Activated B cell treated with CpG ODN at 0.5 μM for 24 hours (primary cell): ENCODE measurements at regions of chr19 and their contacts with region 1.

Region 1: DNA sequence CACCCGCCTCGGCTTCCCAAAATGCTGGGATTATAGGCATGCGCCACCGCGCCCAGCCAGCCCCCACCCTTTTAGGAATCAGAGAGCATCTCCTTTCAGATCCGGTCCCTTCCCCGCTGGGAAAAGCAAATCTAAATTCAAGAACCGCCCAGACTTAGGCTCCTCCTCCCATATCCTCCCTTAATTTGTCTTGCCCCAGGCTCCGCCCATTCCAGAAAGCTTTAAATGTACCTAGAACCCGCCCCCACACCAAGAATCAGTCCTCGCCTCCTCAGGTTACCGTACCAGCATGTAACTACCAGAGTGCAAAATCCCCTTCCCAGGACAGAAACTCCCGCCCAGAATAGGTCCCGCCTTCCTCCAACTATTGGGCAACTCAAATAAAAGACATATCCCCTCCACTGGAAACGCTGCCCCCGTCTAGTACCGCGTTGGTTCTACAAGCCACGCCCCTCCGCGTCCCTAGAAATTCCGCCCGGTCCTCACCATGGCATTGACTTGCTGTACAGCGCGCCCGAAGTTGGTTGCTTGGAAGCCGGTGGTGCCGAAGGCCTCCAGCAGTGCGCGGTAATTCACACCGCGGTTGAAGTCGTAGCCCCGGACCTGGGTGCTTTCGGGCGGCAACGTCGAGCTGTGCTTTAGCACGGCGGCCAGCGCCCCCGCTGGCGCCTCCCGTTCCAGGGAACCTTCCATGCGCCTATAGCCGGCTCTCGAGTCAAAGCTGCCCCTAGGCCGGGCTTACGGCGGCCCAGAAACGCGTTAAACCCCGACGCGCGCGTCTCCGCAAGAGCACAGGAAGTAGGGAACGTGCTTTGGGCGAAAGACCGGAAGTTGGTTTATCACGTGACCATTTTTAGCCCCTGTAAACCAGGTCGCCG is at the start of gene DHPS:
- DNase-seq: peak; percentile 71
- ATAC-seq: peak; percentile 78
- H3K4me3 Mint-ChIP-seq: peak within 1 kb of the TSS; percentile 94
- H3K27ac Mint-ChIP-seq: peak within 1 kb of the TSS; percentile 95
- H3K4me1 Mint-ChIP-seq: peaks cover 24% of the 10 kb centered on the region
- H3K27me3 Mint-ChIP-seq: no peaks in the 10 kb centered on the region
- CTCF ChIP-seq: no peak
- total RNA-seq, gene DHPS: 141 and 160 TPM in 2 replicates

Region 2: DNA sequence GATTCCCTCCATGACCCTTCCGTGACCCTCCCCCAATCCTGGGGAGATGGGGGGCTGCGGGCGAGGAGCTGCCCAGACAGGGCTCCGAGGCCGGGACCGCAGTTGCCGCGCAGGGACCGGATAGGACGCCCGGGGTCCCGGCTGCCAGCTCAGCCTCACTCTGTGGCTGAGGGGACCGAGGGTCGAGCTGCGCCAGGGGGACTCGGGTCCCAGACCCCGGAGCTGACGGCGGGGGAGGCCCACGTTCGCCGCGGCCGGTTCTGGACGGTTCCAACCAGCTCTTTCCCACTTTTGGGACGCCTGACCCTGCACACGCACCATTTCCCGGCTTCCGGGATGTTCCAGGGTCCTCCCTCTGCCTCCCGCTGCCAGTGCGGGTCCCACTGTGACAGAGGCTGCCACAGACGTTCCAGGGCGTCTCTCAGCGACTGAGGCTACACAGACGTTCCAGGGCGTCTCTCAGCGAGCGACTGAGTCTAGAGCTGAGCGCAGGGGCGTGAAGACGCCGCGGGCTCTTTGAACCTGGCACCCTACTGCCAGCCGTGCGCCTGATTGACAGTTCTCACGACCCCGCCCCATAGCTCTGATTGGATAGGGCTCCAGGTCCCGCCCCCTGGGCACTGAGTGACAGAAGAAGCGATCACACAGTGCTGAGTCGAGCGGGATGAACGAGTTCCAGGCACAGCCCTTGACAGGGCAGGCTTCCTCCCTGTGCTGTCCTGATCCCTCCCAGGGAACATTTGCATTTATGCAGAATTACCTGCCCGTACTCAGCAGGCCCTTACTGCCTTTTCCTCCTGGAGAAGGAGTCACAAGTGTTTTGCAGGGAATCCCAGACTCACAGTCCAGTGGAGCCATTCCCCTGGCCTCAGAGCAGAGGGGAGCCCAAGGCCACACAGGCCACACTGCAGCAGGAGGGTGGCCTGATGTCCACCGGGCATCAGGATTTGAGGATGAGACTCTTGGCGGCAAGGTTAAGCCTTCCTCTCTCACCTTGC is 347.9 kb before region 1 on chr19 and contains the start of gene ZNF563:
- CTCF ChIA-PET with region 1: no interaction called
- POLR2A ChIA-PET with region 1: interaction called, 12 read pairs
- intact Hi-C with region 1: no loop called
- DNase-seq: peak; percentile 93
- ATAC-seq: peak; percentile 86
- H3K4me3 Mint-ChIP-seq: peak within 1 kb of the TSS; percentile 96
- H3K27ac Mint-ChIP-seq: peak within 1 kb of the TSS; percentile 92
- H3K4me1 Mint-ChIP-seq: peaks cover 39% of the 10 kb centered on the region
- H3K27me3 Mint-ChIP-seq: no peaks in the 10 kb centered on the region
- CTCF ChIP-seq: no peak
- total RNA-seq, gene ZNF563: 3.6 and 3.7 TPM in 2 replicates

Region 3: GRCh38 chr19:12666265-12667048 is 14.9 kb before region 1 on chr19 and contains the starts of genes MAN2B1 and WDR83:
- CTCF ChIA-PET with region 1: interaction called, 5 read pairs
- POLR2A ChIA-PET with region 1: interaction called, 51 read pairs
- intact Hi-C with region 1: loop called (anchors 1 kb)
- DNase-seq: peak; percentile 83
- ATAC-seq: peak; percentile 70
- H3K4me3 Mint-ChIP-seq: peak within 1 kb of the TSS; percentile 97
- H3K27ac Mint-ChIP-seq: peak within 1 kb of the TSS; percentile 93
- H3K4me1 Mint-ChIP-seq: peaks cover 69% of the 10 kb centered on the region
- H3K27me3 Mint-ChIP-seq: no peaks in the 10 kb centered on the region
- CTCF ChIP-seq: no peak
- total RNA-seq, gene MAN2B1: 251 and 291 TPM in 2 replicates
- total RNA-seq, gene WDR83: 17.7 and 20.8 TPM in 2 replicates

Region 4: DNA sequence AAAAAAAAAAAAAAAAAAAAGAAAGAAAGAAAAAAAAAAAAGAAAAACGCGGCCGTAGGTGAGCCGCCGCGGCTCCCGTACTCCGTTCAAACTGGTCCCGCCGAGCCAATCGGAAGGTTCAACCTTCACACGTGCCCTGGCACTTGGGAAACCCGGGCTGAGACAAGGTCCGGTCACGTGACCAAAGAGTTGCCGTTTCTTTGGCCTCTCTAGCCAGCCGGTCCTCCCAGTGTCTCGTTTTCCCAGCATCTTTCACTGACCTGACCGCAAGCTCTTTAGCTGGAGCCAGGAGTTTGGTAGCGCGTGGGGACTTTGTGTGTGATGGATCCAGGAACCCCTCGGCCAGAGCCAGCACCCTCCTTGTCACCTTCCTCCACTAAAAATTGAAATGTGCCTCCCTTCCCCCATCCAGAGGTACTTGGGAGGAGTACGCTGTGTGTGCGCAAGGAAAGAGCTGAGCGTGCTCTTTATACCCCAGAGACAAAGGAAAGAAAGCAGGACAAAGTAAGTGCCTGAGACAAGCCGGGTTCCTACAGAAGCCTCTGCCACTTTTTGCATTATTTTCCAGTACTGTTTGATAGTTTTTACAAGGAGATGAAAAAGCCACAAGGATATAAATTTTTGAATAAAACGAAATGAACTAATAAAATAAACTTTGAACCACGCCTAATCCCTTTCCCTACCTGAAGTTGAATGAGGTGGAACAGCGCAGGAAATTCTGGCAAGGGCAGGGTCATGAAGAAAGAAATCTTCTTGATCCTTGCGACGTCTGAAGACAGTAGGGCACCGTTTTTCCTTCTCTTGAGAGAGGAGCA is 41.5 kb after region 1 on chr19:
- CTCF ChIA-PET with region 1: no interaction called
- POLR2A ChIA-PET with region 1: interaction called, 24 read pairs
- intact Hi-C with region 1: loop called (anchors 5 kb)
- DNase-seq: peak; percentile 75
- ATAC-seq: peak; percentile 84
- H3K4me3 Mint-ChIP-seq: peak overlapping the region; percentile 92
- H3K27ac Mint-ChIP-seq: peak overlapping the region; percentile 90
- H3K4me1 Mint-ChIP-seq: peaks cover 43% of the 10 kb centered on the region
- H3K27me3 Mint-ChIP-seq: no peaks in the 10 kb centered on the region
- CTCF ChIP-seq: no peak

Region 5: DNA sequence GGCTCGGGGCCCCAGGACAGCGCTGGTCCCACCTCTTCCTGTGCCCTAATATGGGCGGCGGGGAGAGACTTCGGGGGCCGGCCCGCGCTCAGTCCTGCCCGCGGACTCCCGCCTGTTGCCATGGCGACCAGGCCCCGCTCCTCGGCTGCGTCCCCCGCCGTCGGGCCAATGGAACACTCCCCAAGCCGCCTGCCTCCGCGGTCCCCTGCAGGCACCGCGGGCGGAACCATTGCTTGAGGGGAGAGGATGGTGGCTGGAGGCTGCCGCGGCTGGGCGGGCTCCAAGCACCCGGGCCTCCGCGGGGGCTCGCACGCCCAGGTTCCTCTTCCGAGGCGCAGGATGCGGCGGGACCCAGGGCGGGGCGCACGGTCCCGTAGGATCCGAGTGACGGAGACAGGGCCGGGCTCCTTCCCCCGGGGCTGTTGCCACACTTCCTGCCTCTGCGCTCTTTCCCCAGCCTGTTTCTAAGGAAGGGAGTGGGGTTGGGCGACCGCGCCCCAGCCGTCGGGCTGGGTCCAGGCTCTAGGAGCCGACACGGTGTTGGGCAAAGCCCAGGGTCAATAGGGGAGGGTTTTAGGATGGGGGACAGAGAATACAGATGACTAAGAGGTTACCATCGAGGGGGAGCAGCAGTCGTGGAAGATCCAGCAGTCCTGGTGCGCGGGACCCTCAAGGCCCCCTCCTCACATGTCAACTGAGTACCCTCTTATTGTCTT is 108.7 kb after region 1 on chr19:
- CTCF ChIA-PET with region 1: no interaction called
- POLR2A ChIA-PET with region 1: interaction called, 17 read pairs
- intact Hi-C with region 1: no loop called
- DNase-seq: peak; percentile 95
- ATAC-seq: peak; percentile 43
- H3K4me3 Mint-ChIP-seq: peak overlapping the region; percentile 96
- H3K27ac Mint-ChIP-seq: peak overlapping the region; percentile 97
- H3K4me1 Mint-ChIP-seq: peaks cover 52% of the 10 kb centered on the region
- H3K27me3 Mint-ChIP-seq: no peaks in the 10 kb centered on the region
- CTCF ChIP-seq: no peak

Region 6: GRCh38 chr19:12806239-12807081 is 125.1 kb after region 1 on chr19 and contains the start of gene RNASEH2A:
- CTCF ChIA-PET with region 1: no interaction called
- POLR2A ChIA-PET with region 1: interaction called, 10 read pairs
- intact Hi-C with region 1: no loop called
- DNase-seq: peak; percentile 86
- ATAC-seq: peak; percentile 93
- H3K4me3 Mint-ChIP-seq: peak within 1 kb of the TSS; percentile 92
- H3K27ac Mint-ChIP-seq: peak within 1 kb of the TSS; percentile 86
- H3K4me1 Mint-ChIP-seq: peaks cover 23% of the 10 kb centered on the region
- H3K27me3 Mint-ChIP-seq: peaks cover 5% of the 10 kb centered on the region
- CTCF ChIP-seq: no peak
- total RNA-seq, gene RNASEH2A: 13.4 and 22.1 TPM in 2 replicates

Region 7: DNA sequence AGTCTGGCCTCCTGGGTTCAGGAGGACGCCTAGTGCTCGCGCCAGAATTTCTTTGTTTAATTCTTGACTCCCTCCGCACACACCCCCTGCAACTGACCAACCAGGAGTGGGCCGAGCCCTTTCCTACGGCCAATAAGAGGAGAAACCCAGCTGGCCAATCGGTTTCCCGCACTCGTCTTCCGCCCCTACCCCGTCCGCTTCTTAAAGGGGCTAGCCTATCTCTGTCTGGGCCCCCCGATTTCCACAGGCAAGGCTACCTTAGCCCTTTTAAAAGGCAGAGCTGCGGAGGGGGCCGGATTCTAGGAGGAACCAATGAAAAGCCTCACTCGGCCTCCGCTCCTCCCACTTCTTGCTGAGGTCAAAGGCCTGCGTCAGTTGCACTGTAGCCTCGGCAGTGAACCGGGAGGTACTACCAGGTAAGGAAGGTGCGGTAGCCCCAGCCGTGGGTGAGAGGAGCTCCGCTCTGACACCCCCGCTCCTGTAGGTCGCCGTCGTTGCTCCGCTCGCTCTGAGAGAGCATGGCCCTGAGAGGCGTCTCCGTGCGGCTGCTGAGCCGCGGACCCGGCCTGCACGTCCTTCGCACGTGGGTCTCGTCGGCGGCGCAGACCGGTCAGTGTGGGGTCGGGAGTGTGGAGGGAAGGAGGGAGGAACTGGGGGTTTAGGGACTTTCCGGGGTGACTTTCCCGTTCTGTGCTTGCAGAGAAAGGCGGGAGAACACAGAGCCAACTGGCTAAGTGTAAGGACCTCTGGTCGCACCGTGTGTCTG is 209.7 kb after region 1 on chr19 and contains the start of gene GCDH:
- CTCF ChIA-PET with region 1: no interaction called
- POLR2A ChIA-PET with region 1: interaction called, 10 read pairs
- intact Hi-C with region 1: no loop called
- DNase-seq: peak; percentile 81
- ATAC-seq: peak; percentile 93
- H3K4me3 Mint-ChIP-seq: peak within 1 kb of the TSS; percentile 98
- H3K27ac Mint-ChIP-seq: peak within 1 kb of the TSS; percentile 90
- H3K4me1 Mint-ChIP-seq: peaks cover 21% of the 10 kb centered on the region
- H3K27me3 Mint-ChIP-seq: no peaks in the 10 kb centered on the region
- CTCF ChIP-seq: no peak
- total RNA-seq, gene GCDH: 62.3 and 73.9 TPM in 2 replicates

Region 8: GRCh38 chr19:12974301-12975220 is 293.2 kb after region 1 on chr19:
- CTCF ChIA-PET with region 1: no interaction called
- POLR2A ChIA-PET with region 1: no interaction called
- intact Hi-C with region 1: no loop called
- DNase-seq: no peak
- ATAC-seq: no peak
- H3K4me3 Mint-ChIP-seq: no peak overlapping the region
- H3K27ac Mint-ChIP-seq: no peak overlapping the region
- H3K4me1 Mint-ChIP-seq: peaks cover 6% of the 10 kb centered on the region
- H3K27me3 Mint-ChIP-seq: peaks cover 7% of the 10 kb centered on the region
- CTCF ChIP-seq: no peak